HepG2 (cell line): ENCODE measurements at regions of chr5 and their contacts with region 1.

Region 1: GRCh38 chr5:73519531-73520283 is 21.5 kb downstream of the BTF3 start:
- DNase-seq: peak; percentile 84
- ATAC-seq: peak; percentile 98
- H3K4me3 ChIP-seq: peak overlapping the region; percentile 20 to 58 (median 44); a peak in 4 of 6 replicates
- H3K27ac ChIP-seq: no peak overlapping the region
- H3K4me1 ChIP-seq: 0 out of 2 replicates have a peak, but pooled peaks cover 5% of the 10 kb centered on the region
- H3K27me3 ChIP-seq: no peaks in the 10 kb centered on the region
- CTCF ChIP-seq: peak; percentile 95
- EP300 ChIP-seq: no peak
- POLR2A ChIP-seq: no peak
- RAD21 ChIP-seq: peak; percentile 87

Region 2: GRCh38 chr5:73540192-73540591 is 20.5 kb after region 1 on chr5:
- CTCF ChIA-PET with region 1: interaction called, 17 read pairs
- POLR2A ChIA-PET with region 1: interaction called, 3 read pairs
- in situ Hi-C with region 1: no loop called
- intact Hi-C with region 1: loop called (anchors 1 kb)
- DNase-seq: peak; percentile 50
- ATAC-seq: no peak
- H3K4me3 ChIP-seq: no peak overlapping the region
- H3K27ac ChIP-seq: no peak overlapping the region
- H3K4me1 ChIP-seq: peaks cover 67% of the 10 kb centered on the region
- H3K27me3 ChIP-seq: no peaks in the 10 kb centered on the region
- CTCF ChIP-seq: no peak
- EP300 ChIP-seq: no peak
- POLR2A ChIP-seq: no peak
- RAD21 ChIP-seq: no peak

Region 3: DNA sequence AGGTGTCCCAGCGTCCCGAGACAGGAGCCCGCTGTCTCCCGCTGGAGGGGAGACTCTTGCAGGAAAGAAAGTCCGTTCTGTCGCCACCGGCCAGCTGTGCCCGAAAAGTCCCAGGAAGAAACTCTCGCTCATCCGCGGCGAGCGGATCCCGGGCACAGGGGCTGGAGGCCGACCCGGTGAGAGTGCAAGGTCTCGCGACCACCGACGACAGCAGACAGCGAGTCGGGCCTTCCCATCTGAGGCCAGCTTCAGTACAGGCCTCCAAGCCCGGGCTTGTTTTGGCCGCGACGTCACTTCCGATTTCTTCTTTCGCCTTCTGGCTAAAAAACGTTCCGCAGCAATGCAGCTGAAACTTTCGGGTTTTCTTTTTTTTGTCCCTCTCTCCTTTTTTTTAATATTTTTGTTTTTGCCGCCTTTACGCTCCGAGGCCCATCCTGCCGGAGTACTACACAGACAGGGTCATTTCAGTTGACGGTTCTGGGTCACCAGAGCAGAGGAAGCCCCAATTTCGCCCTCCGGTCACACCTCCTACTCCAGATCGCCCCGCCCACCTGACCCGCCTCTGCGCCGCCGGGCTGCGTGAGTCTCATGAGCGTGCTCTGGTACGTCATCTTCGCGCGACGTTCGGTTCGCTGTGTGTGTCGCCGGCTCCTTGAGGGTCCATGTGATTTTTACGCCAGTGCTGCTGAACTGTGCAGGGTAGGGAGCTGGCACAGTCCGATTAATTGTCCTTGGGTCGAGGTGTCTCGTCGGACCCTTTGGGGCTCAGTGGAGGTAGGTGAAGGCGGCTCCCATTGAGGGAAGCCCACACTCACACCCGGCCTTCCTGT is 45.6 kb after region 1 on chr5 and contains the starts of genes ANKRA2 and UTP15:
- CTCF ChIA-PET with region 1: no interaction called
- POLR2A ChIA-PET with region 1: interaction called, 4 read pairs
- in situ Hi-C with region 1: no loop called
- intact Hi-C with region 1: loop called (anchors 1 kb)
- DNase-seq: peak; percentile 95
- ATAC-seq: peak; percentile 95
- H3K4me3 ChIP-seq: peak within 1 kb of the TSS; percentile 77 to 89 (median 82)
- H3K27ac ChIP-seq: peak within 1 kb of the TSS; percentile 75
- H3K4me1 ChIP-seq: peaks cover 28% of the 10 kb centered on the region
- H3K27me3 ChIP-seq: no peaks in the 10 kb centered on the region; a peak in 1 of 5 replicates
- CTCF ChIP-seq: 0 out of 2 replicates have a peak, but pooled peaks have one; percentile 3
- EP300 ChIP-seq: no peak
- POLR2A ChIP-seq: peak; percentile 72 to 75
- RAD21 ChIP-seq: no peak
- total RNA-seq, gene ANKRA2: 20.4 and 23.6 TPM in 2 replicates
- total RNA-seq, gene UTP15: 35.8 and 45.2 TPM in 2 replicates

Region 4: DNA sequence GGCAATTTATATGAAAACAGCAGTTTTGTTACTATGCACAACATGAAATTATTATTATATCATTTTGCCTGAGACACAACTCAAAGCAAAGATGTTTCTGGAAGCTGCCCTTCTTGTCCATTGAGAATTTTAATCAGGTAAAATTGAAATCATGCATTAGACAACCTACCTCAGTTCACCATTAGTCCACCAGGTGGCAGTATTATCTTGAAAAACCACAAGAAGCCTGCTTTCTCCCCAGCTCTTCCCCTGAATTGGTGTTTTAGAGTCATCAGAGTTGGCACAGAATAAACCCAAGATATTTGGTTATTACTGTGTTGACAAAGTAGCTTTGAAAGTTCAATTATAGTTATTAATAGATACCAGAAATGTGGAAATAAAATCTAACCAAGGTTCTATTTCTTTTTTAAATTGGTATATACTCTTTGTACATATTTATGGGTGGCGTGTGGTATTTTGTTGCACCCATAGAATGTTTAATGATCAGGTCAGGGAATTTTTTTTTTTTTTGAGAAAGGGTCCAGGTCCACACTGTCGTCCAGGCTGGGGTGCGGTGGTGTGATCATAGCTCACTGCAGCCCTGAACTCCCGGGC is 71.5 kb after region 1 on chr5:
- CTCF ChIA-PET with region 1: interaction called, 9 read pairs
- POLR2A ChIA-PET with region 1: no interaction called
- in situ Hi-C with region 1: no loop called
- intact Hi-C with region 1: loop called (anchors 2 kb)
- DNase-seq: peak; percentile 79
- ATAC-seq: peak; percentile 77
- H3K4me3 ChIP-seq: no peak overlapping the region
- H3K27ac ChIP-seq: no peak overlapping the region
- H3K4me1 ChIP-seq: peaks cover 9% of the 10 kb centered on the region
- H3K27me3 ChIP-seq: no peaks in the 10 kb centered on the region; a peak in 1 of 5 replicates
- CTCF ChIP-seq: peak; percentile 78
- EP300 ChIP-seq: no peak
- POLR2A ChIP-seq: no peak
- RAD21 ChIP-seq: peak; percentile 81